Esophagus muscularis mucosa (tissue), 4 donors: ENCODE measurements at regions of chr14 and their contacts with region 1.

Region 1: GRCh38 chr14:76710056-76711010 is 50.9 kb upstream of the VASH1 start:
- DNase-seq: no peak
- H3K4me3 ChIP-seq: no peak overlapping the region
- H3K27ac ChIP-seq: no peak overlapping the region
- H3K4me1 ChIP-seq: peaks cover 0 to 13% (median under 1%) of the 10 kb centered on the region in 4 donors
- H3K27me3 ChIP-seq: peaks cover 0 to 5% (median 0%) of the 10 kb centered on the region in 4 donors
- CTCF ChIP-seq: peak; percentile 71 to 82 (median 75)
- EP300 ChIP-seq: no peak
- POLR2A ChIP-seq: no peak

Region 2: DNA sequence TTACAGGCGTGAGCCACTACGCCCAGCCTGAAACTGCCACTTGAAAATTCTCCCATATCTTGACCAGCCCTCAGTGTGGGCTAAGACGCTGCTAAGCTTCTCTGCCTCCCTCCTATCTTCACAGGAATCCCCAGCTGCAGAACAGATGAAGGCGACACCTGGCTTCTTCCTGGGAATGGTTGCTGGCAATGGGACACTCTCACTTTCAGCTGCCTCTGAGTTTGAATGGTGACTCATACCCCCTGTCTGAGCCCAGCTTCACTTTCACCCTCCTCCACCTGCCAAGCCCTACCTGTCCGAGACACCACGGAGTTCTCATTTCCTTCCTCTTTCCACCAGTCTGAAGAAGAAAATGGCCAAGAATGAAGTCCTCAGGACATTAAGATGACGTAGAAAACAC is 32.6 kb after region 1 on chr14:
- intact Hi-C with region 1: no loop called
- DNase-seq: no peak
- H3K4me3 ChIP-seq: no peak overlapping the region
- H3K27ac ChIP-seq: no peak overlapping the region
- H3K4me1 ChIP-seq: no peaks in the 10 kb centered on the region
- H3K27me3 ChIP-seq: no peaks in the 10 kb centered on the region
- CTCF ChIP-seq: no peak
- EP300 ChIP-seq: no peak
- POLR2A ChIP-seq: no peak

Region 3: DNA sequence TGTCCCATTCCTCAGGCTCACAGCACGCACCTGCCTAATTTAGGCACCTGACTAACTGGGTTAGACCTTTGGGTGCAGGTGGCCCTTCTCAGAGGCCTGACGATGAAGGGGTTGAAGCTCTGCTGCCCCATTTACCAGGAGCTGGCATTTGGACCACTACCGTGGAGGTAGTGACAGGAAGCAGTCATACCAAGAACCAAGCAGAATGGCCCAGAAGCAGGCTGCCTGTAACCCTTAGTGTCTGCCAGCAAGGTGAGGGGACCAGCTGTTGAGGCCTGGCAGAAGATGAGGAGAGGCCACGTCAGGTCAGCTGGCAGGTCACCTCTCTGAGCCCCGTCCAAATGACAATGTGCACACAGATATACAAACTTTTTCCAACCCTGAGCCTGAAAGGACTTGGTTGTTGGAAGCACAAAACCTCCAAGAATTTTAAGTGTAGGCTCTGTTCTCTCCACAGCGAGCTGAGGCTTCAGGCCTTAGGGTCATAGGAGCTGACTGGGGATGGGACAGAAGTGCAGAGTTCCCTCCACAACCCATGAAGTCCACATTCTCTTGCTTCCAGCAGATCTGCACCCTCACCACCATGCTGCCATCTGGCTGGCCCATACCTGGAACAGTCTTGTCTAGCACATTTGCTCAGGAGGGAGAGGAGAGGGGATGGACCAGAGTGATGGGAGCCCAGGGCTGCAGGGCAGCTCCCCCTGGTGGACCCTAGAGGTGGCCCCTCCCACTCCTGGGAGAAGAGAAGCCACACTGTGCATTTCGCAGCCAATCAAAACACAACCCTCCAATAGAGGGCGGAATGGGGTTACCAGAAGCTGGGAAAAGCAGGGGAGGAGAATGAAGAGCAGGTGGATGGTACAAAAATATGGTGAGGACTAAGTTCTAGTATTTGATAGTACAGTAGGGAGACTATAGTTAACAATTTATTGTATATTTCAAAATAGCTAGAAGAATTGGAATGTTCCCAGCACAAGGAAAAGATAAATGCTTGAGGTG is 74.2 kb after region 1 on chr14:
- intact Hi-C with region 1: loop called (anchors 2 kb)
- DNase-seq: peak; percentile 92
- H3K4me3 ChIP-seq: no peak overlapping the region
- H3K27ac ChIP-seq: no peak overlapping the region
- H3K4me1 ChIP-seq: peaks cover 20 to 49% (median 42%) of the 10 kb centered on the region in 4 donors
- H3K27me3 ChIP-seq: no peaks in the 10 kb centered on the region
- CTCF ChIP-seq: peak; percentile 70 to 82 (median 74)
- EP300 ChIP-seq: no peak
- POLR2A ChIP-seq: no peak